ENCODE measurements at regions of chr6 and their contacts with region 1.

Region 1: GRCh38 chr6:30489081-30490025 is at the start of gene HLA-E:
- DNase-seq: peak; percentile 95
- H3K4me3 Mint-ChIP-seq: peak within 1 kb of the TSS; percentile 90
- H3K27ac Mint-ChIP-seq: peak within 1 kb of the TSS; percentile 97
- H3K4me1 Mint-ChIP-seq: peaks cover 54% of the 10 kb centered on the region
- H3K27me3 Mint-ChIP-seq: no peaks in the 10 kb centered on the region
- total RNA-seq, gene HLA-E: 598 to 608 TPM

Region 2: GRCh38 chr6:30357678-30358540 is 131.4 kb before region 1 on chr6:
- CTCF ChIA-PET with region 1: no interaction called
- intact Hi-C with region 1: no loop called
- DNase-seq: peak; percentile 70
- H3K4me3 Mint-ChIP-seq: peak overlapping the region; percentile 77
- H3K27ac Mint-ChIP-seq: no peak overlapping the region
- H3K4me1 Mint-ChIP-seq: peaks cover 4% of the 10 kb centered on the region
- H3K27me3 Mint-ChIP-seq: peaks cover 37% of the 10 kb centered on the region

Region 3: DNA sequence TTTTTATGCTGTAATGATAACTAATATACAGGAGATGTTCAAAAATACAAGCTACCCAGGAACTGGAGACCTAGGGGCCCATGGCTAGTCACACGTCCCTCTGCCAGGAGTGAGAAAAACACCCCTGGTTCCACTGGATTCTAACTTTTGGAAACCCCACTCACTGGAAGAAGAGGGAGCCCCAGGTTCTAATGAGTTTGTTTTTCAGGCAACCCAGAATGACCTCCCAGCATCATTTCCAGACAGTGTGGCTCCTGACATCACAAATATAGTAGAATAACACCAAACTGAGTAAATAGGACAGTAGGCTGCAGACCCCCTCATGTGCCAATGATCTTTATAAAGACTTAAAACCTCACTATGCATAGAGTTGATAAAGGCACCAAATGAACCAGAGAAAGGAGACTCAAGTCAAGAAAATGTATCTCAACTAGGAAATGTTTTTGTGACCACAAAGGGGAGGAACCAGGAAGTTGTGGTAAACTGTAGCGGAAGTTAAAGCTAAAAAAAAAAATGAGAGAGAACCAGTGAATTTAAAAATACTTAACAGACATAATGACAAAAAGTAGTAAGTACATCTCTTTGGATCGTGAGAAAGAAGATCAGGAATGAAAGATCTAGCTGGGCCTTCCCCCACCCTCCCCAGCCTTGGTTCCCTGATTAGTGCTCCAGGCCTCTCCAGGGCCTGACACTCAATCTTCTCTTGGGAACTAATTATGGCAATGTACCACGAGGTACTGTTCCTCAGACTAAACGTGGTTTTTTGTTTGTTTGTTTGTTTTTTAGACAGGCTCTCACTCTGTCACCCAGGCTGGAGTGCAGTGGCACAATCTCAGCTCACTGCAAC is 19.8 kb after region 1 on chr6:
- CTCF ChIA-PET with region 1: interaction called, 16 read pairs
- intact Hi-C with region 1: no loop called
- DNase-seq: peak; percentile 42
- H3K4me3 Mint-ChIP-seq: peak overlapping the region; percentile 60
- H3K27ac Mint-ChIP-seq: peak overlapping the region; percentile 98
- H3K4me1 Mint-ChIP-seq: peaks cover 69% of the 10 kb centered on the region
- H3K27me3 Mint-ChIP-seq: no peaks in the 10 kb centered on the region

Region 4: GRCh38 chr6:30533460-30534294 is 44.3 kb after region 1 on chr6:
- CTCF ChIA-PET with region 1: interaction called, 367 read pairs
- intact Hi-C with region 1: loop called (anchors 1 kb)
- DNase-seq: no peak
- H3K4me3 Mint-ChIP-seq: peak overlapping the region; percentile 27
- H3K27ac Mint-ChIP-seq: peak overlapping the region; percentile 93
- H3K4me1 Mint-ChIP-seq: peaks cover 49% of the 10 kb centered on the region
- H3K27me3 Mint-ChIP-seq: no peaks in the 10 kb centered on the region

Region 5: DNA sequence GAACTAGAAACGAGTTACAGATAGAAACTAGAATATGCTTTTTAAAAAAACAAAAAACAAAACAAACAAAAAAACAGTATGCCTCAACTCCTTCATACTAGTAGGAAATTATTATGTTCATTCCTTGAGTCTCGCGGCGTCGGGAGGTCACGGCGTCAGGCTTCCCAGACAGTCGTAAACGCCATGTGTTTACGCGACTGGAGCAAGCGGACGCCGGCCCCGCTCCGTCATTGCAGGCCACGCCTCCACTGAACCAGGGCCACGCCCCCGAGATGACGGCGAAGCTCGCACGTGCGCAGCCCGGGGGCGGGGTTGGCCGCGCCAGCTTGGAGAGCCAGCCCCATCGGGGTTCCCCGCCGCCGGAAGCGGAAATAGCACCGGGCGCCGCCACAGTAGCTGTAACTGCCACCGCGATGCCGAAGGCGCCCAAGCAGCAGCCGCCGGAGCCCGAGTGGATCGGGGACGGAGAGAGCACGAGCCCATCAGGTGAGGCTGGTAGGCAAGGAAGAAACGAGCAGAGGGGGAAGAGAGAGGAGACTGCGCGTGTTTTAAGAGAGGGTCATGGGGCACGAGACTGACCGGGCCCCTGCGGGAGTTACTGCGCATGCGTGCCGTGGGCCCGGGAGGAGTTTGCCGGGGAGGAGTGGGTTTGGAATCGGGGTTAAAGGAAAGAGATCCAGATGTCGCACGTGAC is 81.9 kb after region 1 on chr6 and contains the start of gene ABCF1:
- CTCF ChIA-PET with region 1: interaction called, 3 read pairs
- intact Hi-C with region 1: loop called (anchors 1 kb)
- DNase-seq: peak; percentile 99
- H3K4me3 Mint-ChIP-seq: peak within 1 kb of the TSS; percentile 98
- H3K27ac Mint-ChIP-seq: peak within 1 kb of the TSS; percentile 95
- H3K4me1 Mint-ChIP-seq: peaks cover 70% of the 10 kb centered on the region
- H3K27me3 Mint-ChIP-seq: no peaks in the 10 kb centered on the region
- total RNA-seq, gene ABCF1: 79.5 to 82.7 TPM

Region 6: DNA sequence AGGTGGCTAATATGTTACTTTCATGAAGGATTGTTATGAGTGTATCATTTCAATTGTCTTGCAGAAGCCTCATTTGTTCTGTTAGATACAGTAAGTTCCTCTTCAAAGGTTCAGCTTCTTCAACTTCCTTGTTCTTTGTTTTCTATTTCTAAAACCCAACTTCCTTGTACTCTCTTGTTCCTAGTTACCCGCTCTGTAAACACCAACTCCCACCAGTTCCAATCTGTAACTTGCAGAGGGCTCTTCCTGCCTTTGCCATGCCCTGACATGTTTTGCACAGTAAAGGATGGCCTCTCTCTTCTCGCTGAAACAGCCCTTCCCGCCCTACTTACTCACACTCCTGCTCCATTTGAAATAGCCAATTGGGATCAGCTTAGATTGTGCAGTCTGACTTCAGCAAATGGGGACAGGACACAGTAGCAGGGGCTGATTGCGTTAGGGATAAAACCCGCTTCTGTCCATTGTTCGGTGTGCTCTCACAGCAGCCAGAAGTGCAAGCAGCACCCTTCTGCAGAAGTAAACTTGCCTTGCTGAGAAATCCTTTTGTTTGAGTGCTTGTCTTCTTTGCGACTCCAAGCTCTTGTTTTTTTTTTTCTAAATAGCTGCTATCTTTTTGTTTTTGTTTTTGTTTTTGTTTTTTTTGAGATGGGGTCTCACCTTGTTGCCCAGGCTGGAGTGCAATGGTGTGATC is 727.0 kb after region 1 on chr6:
- CTCF ChIA-PET with region 1: no interaction called
- intact Hi-C with region 1: no loop called
- DNase-seq: no peak
- H3K4me3 Mint-ChIP-seq: no peak overlapping the region
- H3K27ac Mint-ChIP-seq: peak overlapping the region; percentile 2
- H3K4me1 Mint-ChIP-seq: peaks cover 3% of the 10 kb centered on the region
- H3K27me3 Mint-ChIP-seq: no peaks in the 10 kb centered on the region

Region 7: DNA sequence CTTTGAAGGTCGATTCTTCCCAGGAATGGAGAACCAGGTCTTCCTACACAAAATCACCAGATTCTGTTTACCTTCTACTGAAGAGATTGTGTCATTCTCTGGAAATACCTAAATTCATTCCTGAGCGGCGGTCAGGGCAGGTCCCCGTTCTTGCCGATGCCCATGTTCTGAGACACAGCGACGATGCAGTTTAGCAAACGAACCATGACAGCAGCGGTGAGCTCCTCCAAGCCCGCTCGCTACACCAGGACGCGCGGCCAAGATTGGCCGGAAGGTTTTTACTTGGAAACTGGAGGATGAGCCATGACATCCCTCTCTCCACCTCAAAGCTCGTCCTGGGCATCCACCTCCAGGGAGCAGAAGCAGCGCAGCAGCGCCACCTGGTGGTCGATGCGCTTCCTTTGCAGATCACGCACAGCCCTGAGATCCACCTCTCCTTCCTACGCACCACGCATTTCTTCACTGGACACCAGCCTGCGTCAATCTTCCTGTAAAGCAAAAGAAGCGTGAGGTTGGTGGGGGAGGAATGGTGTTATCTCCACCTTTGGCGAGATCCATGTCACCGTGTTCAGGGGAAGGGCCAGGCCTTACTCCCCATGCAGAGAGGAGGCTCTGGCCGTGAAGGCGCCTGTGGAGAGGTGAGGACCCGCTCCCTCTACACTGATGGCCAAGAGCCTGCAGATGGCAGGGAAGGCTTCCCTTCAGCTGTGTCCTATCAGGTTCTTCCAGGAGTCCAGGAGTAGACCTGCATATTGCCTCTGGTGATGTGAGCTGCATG is 877.5 kb after region 1 on chr6:
- CTCF ChIA-PET with region 1: no interaction called
- intact Hi-C with region 1: no loop called
- DNase-seq: peak; percentile 91
- H3K4me3 Mint-ChIP-seq: peak overlapping the region; percentile 76
- H3K27ac Mint-ChIP-seq: peak overlapping the region; percentile 15
- H3K4me1 Mint-ChIP-seq: peaks cover 30% of the 10 kb centered on the region
- H3K27me3 Mint-ChIP-seq: no peaks in the 10 kb centered on the region